ENCODE measurements at regions of chr5 and their contacts with region 1.

Region 1: DNA sequence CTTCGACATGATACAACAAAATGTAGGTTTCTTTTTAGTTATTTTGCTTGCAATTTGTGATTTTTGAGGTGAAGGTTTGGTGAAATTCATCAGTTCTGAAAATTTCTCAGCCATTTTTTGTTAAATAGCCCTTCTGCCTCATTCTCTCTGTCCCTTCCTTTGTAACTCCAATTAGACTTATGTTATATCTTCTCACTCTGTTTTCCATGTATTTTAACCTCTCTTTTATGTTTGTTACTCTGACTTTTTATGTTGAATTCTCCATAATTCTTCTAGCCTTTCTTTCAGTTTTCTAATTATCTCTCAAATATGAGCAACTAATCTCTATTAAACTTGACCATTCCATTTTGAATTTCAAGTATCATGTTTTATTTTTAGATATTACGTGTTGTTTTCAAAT is 172.2 kb upstream of the VCAN start:
- DNase-seq: no peak
- ATAC-seq: no peak
- H3K4me3 ChIP-seq: no peak overlapping the region
- H3K4me3 Mint-ChIP-seq: no peak overlapping the region
- H3K27ac ChIP-seq: no peak overlapping the region
- H3K27ac Mint-ChIP-seq: no peak overlapping the region
- H3K4me1 ChIP-seq: no peaks in the 10 kb centered on the region
- H3K4me1 Mint-ChIP-seq: no peaks in the 10 kb centered on the region
- H3K27me3 ChIP-seq: no peaks in the 10 kb centered on the region
- H3K27me3 Mint-ChIP-seq: no peaks in the 10 kb centered on the region
- CTCF ChIP-seq: no peak

Region 2: GRCh38 chr5:82952326-82952725 is 347.0 kb before region 1 on chr5:
- CTCF ChIA-PET with region 1: no interaction called
- POLR2A ChIA-PET with region 1: no interaction called
- intact Hi-C with region 1: no loop called
- DNase-seq: no peak
- ATAC-seq: no peak
- H3K4me3 ChIP-seq: no peak overlapping the region
- H3K4me3 Mint-ChIP-seq: no peak overlapping the region
- H3K27ac ChIP-seq: no peak overlapping the region
- H3K27ac Mint-ChIP-seq: no peak overlapping the region
- H3K4me1 ChIP-seq: no peaks in the 10 kb centered on the region
- H3K4me1 Mint-ChIP-seq: no peaks in the 10 kb centered on the region
- H3K27me3 ChIP-seq: no peaks in the 10 kb centered on the region
- H3K27me3 Mint-ChIP-seq: no peaks in the 10 kb centered on the region
- CTCF ChIP-seq: no peak

Region 3: GRCh38 chr5:83000428-83000827 is 298.9 kb before region 1 on chr5:
- CTCF ChIA-PET with region 1: no interaction called
- POLR2A ChIA-PET with region 1: no interaction called
- intact Hi-C with region 1: no loop called
- DNase-seq: no peak
- ATAC-seq: no peak
- H3K4me3 ChIP-seq: no peak overlapping the region
- H3K4me3 Mint-ChIP-seq: no peak overlapping the region
- H3K27ac ChIP-seq: no peak overlapping the region
- H3K27ac Mint-ChIP-seq: no peak overlapping the region
- H3K4me1 ChIP-seq: no peaks in the 10 kb centered on the region
- H3K4me1 Mint-ChIP-seq: no peaks in the 10 kb centered on the region
- H3K27me3 ChIP-seq: no peaks in the 10 kb centered on the region
- H3K27me3 Mint-ChIP-seq: no peaks in the 10 kb centered on the region
- CTCF ChIP-seq: no peak

Region 4: DNA sequence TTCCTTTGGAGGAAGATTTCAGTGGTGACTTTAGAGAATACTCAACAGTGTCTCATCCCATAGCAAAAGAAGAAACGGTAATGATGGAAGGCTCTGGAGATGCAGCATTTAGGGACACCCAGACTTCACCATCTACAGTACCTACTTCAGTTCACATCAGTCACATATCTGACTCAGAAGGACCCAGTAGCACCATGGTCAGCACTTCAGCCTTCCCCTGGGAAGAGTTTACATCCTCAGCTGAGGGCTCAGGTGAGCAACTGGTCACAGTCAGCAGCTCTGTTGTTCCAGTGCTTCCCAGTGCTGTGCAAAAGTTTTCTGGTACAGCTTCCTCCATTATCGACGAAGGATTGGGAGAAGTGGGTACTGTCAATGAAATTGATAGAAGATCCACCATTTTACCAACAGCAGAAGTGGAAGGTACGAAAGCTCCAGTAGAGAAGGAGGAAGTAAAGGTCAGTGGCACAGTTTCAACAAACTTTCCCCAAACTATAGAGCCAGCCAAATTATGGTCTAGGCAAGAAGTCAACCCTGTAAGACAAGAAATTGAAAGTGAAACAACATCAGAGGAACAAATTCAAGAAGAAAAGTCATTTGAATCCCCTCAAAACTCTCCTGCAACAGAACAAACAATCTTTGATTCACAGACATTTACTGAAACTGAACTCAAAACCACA is 239.6 kb after region 1 on chr5:
- CTCF ChIA-PET with region 1: no interaction called
- POLR2A ChIA-PET with region 1: no interaction called
- intact Hi-C with region 1: loop called in 1 of 2 experiments (anchors 5 kb)
- DNase-seq: no peak
- ATAC-seq: no peak
- H3K4me3 ChIP-seq: no peak overlapping the region
- H3K4me3 Mint-ChIP-seq: no peak overlapping the region
- H3K27ac ChIP-seq: no peak overlapping the region
- H3K27ac Mint-ChIP-seq: no peak overlapping the region
- H3K4me1 ChIP-seq: no peaks in the 10 kb centered on the region
- H3K4me1 Mint-ChIP-seq: peaks cover 8% of the 10 kb centered on the region
- H3K27me3 ChIP-seq: peaks cover 0 to 2% of the 10 kb centered on the region in 2 experiments
- H3K27me3 Mint-ChIP-seq: peaks cover 11% of the 10 kb centered on the region
- CTCF ChIP-seq: no peak